Spleen (tissue), 13 donors: ENCODE measurements at regions of chr19 and their contacts with region 1.

Region 1: GRCh38 chr19:18058208-18059030 is 28.3 kb downstream of the IL12RB1 start:
- DNase-seq: peak; percentile 95
- H3K4me3 ChIP-seq: peak overlapping the region in 5 of 8 donors; percentile 13 to 54 (median 24)
- H3K27ac ChIP-seq: peak overlapping the region; percentile 70 to 90 (median 82)
- H3K4me1 ChIP-seq: peaks cover 7 to 26% (median 14%) of the 10 kb centered on the region in 6 donors
- H3K27me3 ChIP-seq: no peaks in the 10 kb centered on the region
- CTCF ChIP-seq: peak; percentile 92 to 98 (median 95)
- POLR2A ChIP-seq: no peak

Region 2: DNA sequence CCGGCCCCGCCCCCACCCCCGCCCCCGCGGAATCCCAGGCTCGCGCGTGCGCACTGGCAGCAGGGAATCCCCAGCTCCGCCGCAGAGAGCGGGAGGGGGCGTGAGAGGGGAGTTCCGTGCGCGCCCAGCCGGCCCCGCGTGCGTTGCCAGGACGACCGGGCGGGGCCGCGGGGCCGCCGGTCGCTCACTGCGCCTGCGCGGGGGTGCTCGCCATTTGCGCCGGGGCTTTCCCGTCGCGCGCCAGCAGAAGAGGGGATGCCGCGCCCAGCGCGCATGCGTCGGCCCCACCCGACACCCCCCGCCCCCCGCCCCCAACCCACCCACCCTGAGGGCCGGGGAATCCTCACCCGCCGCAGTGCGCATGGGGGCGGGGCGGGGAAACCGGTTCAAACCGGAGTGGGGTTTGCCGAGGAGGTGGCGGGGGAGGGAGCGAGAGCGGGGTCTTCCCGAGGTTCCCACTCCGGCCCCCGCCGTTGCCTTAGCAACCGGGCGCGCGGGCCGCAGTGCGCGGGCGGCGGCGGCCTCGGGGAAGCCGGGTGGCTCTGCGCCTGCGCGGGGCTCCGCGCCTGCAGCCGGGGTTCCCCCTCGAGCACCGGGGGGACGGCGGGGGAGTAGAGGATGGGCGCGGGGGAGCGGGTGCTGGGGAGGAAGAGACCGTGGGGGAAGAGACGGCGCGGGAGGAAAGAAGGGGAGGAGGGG is 110.5 kb before region 1 on chr19:
- intact Hi-C with region 1: loop called (anchors 10 kb)
- DNase-seq: peak; percentile 97
- H3K4me3 ChIP-seq: peak overlapping the region; percentile 56 to 93 (median 84)
- H3K27ac ChIP-seq: peak overlapping the region in 7 of 8 donors; percentile 67 to 84 (median 78)
- H3K4me1 ChIP-seq: peaks cover 41 to 71% (median 65%) of the 10 kb centered on the region in 6 donors
- H3K27me3 ChIP-seq: peaks cover 20 to 50% (median 45%) of the 10 kb centered on the region in 7 donors
- CTCF ChIP-seq: peak in 1 of 11 experiments; percentile 21
- POLR2A ChIP-seq: no peak

Region 3: DNA sequence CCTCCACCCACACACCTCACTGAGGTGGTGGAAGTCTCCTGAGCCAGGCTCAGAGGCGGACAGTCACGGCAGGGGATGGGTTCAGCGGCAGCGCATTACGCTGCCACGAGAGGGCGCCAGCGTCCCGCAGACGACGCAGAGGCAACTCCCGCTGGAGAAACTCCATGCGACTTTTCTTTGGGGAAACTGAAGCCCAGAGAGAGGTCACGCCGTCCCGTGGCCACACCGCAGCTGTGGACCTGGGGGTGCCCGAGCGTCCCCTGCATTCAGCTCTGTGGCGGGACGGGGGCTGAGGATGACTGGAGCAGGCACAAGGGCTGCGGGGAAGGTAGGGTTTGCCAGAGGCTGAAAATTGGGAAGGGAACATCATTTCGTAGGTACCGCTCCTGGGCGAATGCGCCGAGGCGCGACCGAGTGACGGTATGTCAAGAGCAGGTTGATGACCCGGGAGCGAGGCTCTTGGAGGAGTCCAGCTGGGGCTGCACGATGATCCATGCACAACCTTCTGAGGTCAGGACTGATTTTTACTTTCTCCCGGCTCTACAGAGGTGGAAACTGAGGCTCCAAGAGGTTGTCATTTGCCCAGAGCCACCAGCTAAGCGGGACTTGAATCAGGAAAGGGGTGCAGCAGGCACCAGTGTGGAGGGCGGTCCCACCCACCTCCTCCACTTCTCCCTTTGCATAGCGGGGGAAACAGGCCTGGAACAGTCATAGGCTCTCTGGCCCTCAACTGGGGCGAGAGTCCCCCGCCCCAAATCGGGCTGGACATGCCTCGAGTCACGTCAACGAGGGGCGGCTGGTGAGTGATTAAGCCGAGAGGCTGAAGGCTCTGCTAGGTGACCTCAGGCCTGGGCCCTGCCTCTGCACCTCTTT is 51.1 kb before region 1 on chr19:
- intact Hi-C with region 1: loop called (anchors 1 kb)
- DNase-seq: peak; percentile 95
- H3K4me3 ChIP-seq: peak overlapping the region; percentile 35 to 71 (median 59)
- H3K27ac ChIP-seq: peak overlapping the region; percentile 63 to 91 (median 86)
- H3K4me1 ChIP-seq: peaks cover 21 to 80% (median 50%) of the 10 kb centered on the region in 6 donors
- H3K27me3 ChIP-seq: no peaks in the 10 kb centered on the region
- CTCF ChIP-seq: peak; percentile 94 to 100 (median 99)
- POLR2A ChIP-seq: no peak